Mammary epithelial cell (primary cell): ENCODE measurements at regions of chr3 and their contacts with region 1.

Region 1: GRCh38 chr3:136042608-136043221 is 77.2 kb downstream of the PPP2R3A start:
- DNase-seq: peak; percentile 41
- H3K4me3 ChIP-seq: no peak overlapping the region
- H3K27ac ChIP-seq: no peak overlapping the region
- H3K4me1 ChIP-seq: no peaks in the 10 kb centered on the region
- H3K27me3 ChIP-seq: no peaks in the 10 kb centered on the region
- CTCF ChIP-seq: peak; percentile 49 to 58

Region 2: GRCh38 chr3:134794950-134795745 is 1247.6 kb before region 1 on chr3 and contains the start of gene EPHB1:
- CTCF ChIA-PET with region 1: no interaction called
- dilution Hi-C with region 1: no loop called
- in situ Hi-C with region 1: loop called in 1 of 2 experiments (anchors 25 kb)
- intact Hi-C with region 1: loop called (anchors 1 kb)
- DNase-seq: peak; percentile 82
- H3K4me3 ChIP-seq: peak within 1 kb of the TSS; percentile 42 to 55 (median 44)
- H3K27ac ChIP-seq: no peak within 1 kb of the TSS
- H3K4me1 ChIP-seq: peaks cover 12% of the 10 kb centered on the region
- H3K27me3 ChIP-seq: peaks cover 25% of the 10 kb centered on the region
- CTCF ChIP-seq: peak; percentile 68 to 77
- total RNA-seq, gene EPHB1: 0.24 TPM in 1 of 2 donors, not detected in the other

Region 3: GRCh38 chr3:134803051-134803505 is 1239.6 kb before region 1 on chr3:
- CTCF ChIA-PET with region 1: no interaction called
- dilution Hi-C with region 1: no loop called
- in situ Hi-C with region 1: loop called in 1 of 2 experiments (anchors 25 kb)
- intact Hi-C with region 1: no loop called
- DNase-seq: no peak
- H3K4me3 ChIP-seq: no peak overlapping the region
- H3K27ac ChIP-seq: no peak overlapping the region
- H3K4me1 ChIP-seq: no peaks in the 10 kb centered on the region
- H3K27me3 ChIP-seq: peaks cover 3% of the 10 kb centered on the region
- CTCF ChIP-seq: no peak

Region 4: GRCh38 chr3:135736740-135737139 is 306.0 kb before region 1 on chr3:
- CTCF ChIA-PET with region 1: no interaction called
- dilution Hi-C with region 1: no loop called
- in situ Hi-C with region 1: loop called in 1 of 2 experiments (anchors 25 kb)
- intact Hi-C with region 1: loop called (anchors 2 kb)
- DNase-seq: peak; percentile 30
- H3K4me3 ChIP-seq: no peak overlapping the region
- H3K27ac ChIP-seq: no peak overlapping the region
- H3K4me1 ChIP-seq: no peaks in the 10 kb centered on the region
- H3K27me3 ChIP-seq: no peaks in the 10 kb centered on the region
- CTCF ChIP-seq: peak; percentile 42 to 45

Region 5: GRCh38 chr3:135905058-135905724 is 137.5 kb before region 1 on chr3:
- CTCF ChIA-PET with region 1: interaction called, 7 read pairs
- dilution Hi-C with region 1: no loop called
- in situ Hi-C with region 1: no loop called
- intact Hi-C with region 1: loop called (anchors 1 kb)
- DNase-seq: peak; percentile 35
- H3K4me3 ChIP-seq: no peak overlapping the region
- H3K27ac ChIP-seq: no peak overlapping the region
- H3K4me1 ChIP-seq: peaks cover 18% of the 10 kb centered on the region
- H3K27me3 ChIP-seq: no peaks in the 10 kb centered on the region
- CTCF ChIP-seq: peak; percentile 40 to 58

Region 6: GRCh38 chr3:135918580-135918962 is 124.1 kb before region 1 on chr3:
- CTCF ChIA-PET with region 1: interaction called, 6 read pairs
- dilution Hi-C with region 1: no loop called
- in situ Hi-C with region 1: loop called in 1 of 2 experiments (anchors 5 kb)
- intact Hi-C with region 1: loop called (anchors 1 kb)
- DNase-seq: peak; percentile 31
- H3K4me3 ChIP-seq: no peak overlapping the region
- H3K27ac ChIP-seq: no peak overlapping the region
- H3K4me1 ChIP-seq: peaks cover 22% of the 10 kb centered on the region
- H3K27me3 ChIP-seq: no peaks in the 10 kb centered on the region
- CTCF ChIP-seq: peak; percentile 52 to 55

Region 7: DNA sequence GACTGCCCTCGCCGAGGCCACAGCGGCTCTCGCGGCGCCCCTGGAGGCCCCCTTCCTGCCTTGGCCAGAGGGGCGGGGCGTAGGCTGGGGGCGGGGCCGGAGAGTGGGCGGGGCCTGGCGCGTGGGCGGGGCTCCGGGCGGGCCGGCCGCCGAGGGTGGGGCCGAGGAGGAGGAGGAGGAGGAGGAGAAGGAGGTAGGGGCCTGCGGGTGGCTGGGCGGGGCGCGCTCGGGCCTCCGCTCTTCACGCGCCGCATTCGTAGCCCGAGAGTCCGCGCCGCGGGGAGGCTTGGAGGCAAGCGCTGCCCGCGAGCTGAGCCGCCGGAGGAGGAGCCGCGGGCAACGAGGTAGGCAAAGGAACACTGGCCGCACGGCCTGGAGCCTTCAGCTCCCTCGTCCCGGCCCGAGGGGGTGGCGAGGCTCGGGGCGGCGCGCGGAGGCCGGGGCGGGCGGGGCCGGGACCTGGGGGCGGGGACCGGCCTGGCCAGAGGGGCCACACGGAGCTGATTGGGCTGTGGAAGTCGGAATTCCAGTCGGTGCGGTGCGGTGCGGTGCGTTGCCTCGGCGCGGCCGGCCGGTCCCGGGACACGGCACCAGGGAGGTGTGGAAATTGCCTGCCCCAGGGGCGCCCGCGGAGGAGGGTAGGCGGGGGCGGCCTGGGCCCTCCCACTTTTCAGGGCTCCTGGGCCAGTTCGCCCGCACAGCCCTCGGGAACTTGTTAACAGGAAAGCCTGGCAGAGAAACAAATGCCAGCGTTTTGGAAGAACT is 77.0 kb before region 1 on chr3 and contains the start of gene PPP2R3A:
- CTCF ChIA-PET with region 1: no interaction called
- dilution Hi-C with region 1: no loop called
- in situ Hi-C with region 1: no loop called
- intact Hi-C with region 1: loop called (anchors 1 kb)
- DNase-seq: peak; percentile 86
- H3K4me3 ChIP-seq: peak within 1 kb of the TSS; percentile 71 to 91 (median 80)
- H3K27ac ChIP-seq: peak within 1 kb of the TSS; percentile 76
- H3K4me1 ChIP-seq: peaks cover 32% of the 10 kb centered on the region
- H3K27me3 ChIP-seq: no peaks in the 10 kb centered on the region
- CTCF ChIP-seq: no peak
- total RNA-seq, gene PPP2R3A: 16.4 to 20.0 TPM

Region 8: GRCh38 chr3:136518102-136518501 is 475.4 kb after region 1 on chr3:
- CTCF ChIA-PET with region 1: no interaction called
- dilution Hi-C with region 1: no loop called
- in situ Hi-C with region 1: no loop called
- intact Hi-C with region 1: no loop called
- DNase-seq: no peak
- H3K4me3 ChIP-seq: no peak overlapping the region
- H3K27ac ChIP-seq: no peak overlapping the region
- H3K4me1 ChIP-seq: no peaks in the 10 kb centered on the region
- H3K27me3 ChIP-seq: no peaks in the 10 kb centered on the region
- CTCF ChIP-seq: no peak